Right ventricle myocardium inferior (tissue), 1 donor: ENCODE measurements at regions of chr2 and their contacts with region 1.

Region 1: GRCh38 chr2:224585205-224586088 is at the start of gene CUL3:
- DNase-seq: peak; percentile 99
- ATAC-seq: peak; percentile 99
- total RNA-seq, gene CUL3: 74.5 TPM

Region 2: DNA sequence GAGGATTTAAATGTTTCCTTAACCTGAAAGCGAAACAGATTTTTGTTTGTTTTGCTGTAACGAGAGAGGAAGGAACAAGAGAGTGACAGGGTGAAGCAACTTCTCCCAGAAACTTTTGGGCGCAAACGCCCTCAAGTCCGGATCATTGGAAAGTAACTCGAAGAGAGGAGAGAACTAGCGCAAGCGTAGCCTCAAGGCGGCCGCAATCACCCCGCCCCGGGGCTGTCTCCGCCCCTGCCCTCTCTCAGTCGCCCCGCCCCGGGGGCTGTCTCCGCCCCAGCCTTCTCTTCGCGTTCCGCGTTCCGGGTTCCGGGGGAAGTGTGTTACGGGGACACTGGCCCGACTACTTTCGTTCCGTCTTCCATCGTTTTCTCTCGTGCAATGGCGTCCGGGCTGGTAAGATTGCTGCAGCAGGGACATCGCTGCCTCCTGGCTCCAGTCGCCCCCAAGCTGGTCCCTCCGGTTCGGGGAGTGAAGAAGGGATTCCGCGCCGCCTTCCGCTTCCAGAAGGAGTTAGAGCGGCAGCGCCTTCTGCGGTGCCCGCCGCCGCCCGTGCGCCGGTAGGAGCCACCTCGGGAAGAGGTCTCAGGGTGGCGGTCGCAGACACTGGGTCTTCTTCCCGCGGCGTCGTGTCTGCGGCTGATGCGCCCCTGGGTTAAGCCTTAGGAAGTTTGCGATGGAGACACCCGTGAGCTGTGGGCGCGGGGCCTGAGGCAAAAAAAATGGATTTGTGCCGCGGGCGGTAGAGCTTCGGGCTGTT is 628.2 kb before region 1 on chr2 and contains the start of gene MRPL44:
- intact Hi-C with region 1: loop called (anchors 5 kb)
- DNase-seq: peak; percentile 99
- ATAC-seq: peak; percentile 100
- total RNA-seq, gene MRPL44: 36.5 TPM